Mammary epithelial cell (primary cell): ENCODE measurements at regions of chr10 and their contacts with region 1.

Region 1: DNA sequence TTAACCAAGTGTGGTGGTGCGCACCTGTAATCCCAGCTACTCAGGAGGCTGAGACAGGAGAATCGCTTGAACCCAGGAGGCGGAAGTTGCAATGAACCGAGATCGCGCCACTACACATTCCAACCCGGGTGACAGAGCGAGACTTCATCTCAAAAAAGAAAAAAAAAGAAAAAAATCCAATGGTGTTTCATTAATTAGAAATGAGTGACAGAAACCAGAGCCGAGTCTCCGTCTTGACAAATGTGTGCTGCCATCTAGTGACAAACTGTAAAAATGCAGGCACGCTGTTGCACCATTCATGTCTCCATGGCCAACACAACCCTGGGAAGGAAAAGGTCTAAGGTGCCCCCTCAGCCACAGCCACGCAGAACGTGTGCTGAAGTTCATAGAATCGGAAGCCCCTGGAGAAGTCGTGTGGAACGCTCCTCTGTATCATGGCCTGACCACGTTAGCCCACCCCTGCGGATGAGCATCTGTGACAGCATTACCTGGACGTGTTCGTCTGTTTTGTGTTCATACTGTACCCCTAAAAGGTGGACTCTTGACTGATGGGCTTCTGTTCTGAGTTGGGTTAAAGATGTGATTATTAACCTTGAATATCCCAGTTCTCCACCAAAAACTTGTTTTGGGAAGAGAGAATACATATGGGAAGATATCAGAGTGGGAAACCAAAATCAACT is 94.9 kb downstream of the LYZL2 start:
- DNase-seq: peak; percentile 42
- H3K4me3 ChIP-seq: no peak overlapping the region
- H3K27ac ChIP-seq: no peak overlapping the region
- H3K4me1 ChIP-seq: peaks cover 5% of the 10 kb centered on the region
- H3K27me3 ChIP-seq: no peaks in the 10 kb centered on the region
- CTCF ChIP-seq: peak; percentile 80 to 89

Region 2: DNA sequence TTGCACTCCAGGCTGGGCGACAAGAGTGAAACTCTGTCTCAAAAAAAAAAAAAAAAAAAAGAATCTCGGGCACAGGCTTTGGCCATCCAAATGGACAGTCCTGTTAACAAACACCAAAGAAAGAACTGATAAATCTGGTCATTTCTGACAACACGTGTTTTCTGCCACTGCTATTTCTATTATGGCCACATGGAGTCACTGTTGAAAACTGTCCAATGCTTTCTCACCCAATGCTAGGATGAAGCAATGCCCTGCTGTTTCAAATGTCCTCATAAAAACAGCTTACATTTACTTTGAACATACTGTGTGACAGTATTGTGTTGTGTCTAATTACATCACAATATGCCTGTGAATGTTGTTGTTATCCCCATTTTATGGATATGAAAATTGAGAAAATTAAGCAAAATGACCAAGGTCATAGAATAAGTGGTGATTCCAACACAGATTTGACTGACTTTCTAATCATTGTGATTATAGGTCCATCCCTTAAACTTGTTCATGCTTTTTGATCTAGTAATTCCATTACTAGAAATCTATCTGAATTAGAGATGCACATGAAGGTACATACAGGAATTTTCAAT is 120.5 kb before region 1 on chr10:
- CTCF ChIA-PET with region 1: no interaction called
- dilution Hi-C with region 1: no loop called
- in situ Hi-C with region 1: loop called in 1 of 2 experiments (anchors 5 kb)
- intact Hi-C with region 1: loop called (anchors 1 kb)
- DNase-seq: peak; percentile 48
- H3K4me3 ChIP-seq: no peak overlapping the region
- H3K27ac ChIP-seq: no peak overlapping the region
- H3K4me1 ChIP-seq: no peaks in the 10 kb centered on the region
- H3K27me3 ChIP-seq: no peaks in the 10 kb centered on the region
- CTCF ChIP-seq: peak; percentile 86 to 89

Region 3: GRCh38 chr10:30763918-30764317 is 229.3 kb after region 1 on chr10:
- CTCF ChIA-PET with region 1: no interaction called
- dilution Hi-C with region 1: no loop called
- in situ Hi-C with region 1: no loop called
- intact Hi-C with region 1: no loop called
- DNase-seq: no peak
- H3K4me3 ChIP-seq: no peak overlapping the region
- H3K27ac ChIP-seq: no peak overlapping the region
- H3K4me1 ChIP-seq: no peaks in the 10 kb centered on the region
- H3K27me3 ChIP-seq: peaks cover 3% of the 10 kb centered on the region
- CTCF ChIP-seq: no peak

Region 4: GRCh38 chr10:31479752-31480151 is 945.1 kb after region 1 on chr10:
- CTCF ChIA-PET with region 1: no interaction called
- dilution Hi-C with region 1: no loop called
- in situ Hi-C with region 1: no loop called
- intact Hi-C with region 1: no loop called
- DNase-seq: no peak
- H3K4me3 ChIP-seq: no peak overlapping the region
- H3K27ac ChIP-seq: no peak overlapping the region
- H3K4me1 ChIP-seq: no peaks in the 10 kb centered on the region
- H3K27me3 ChIP-seq: peaks cover 4% of the 10 kb centered on the region
- CTCF ChIP-seq: no peak